IMR-90 (cell line): ENCODE measurements at regions of chr19 and their contacts with region 1.

Region 1: GRCh38 chr19:23686621-23687423 is at the start of gene ZNF675:
- DNase-seq: peak; percentile 89
- ATAC-seq: peak; percentile 96
- H3K4me3 ChIP-seq: peak within 1 kb of the TSS; percentile 88
- H3K27ac ChIP-seq: peak within 1 kb of the TSS; percentile 74
- H3K4me1 ChIP-seq: no peaks in the 10 kb centered on the region
- H3K27me3 ChIP-seq: no peaks in the 10 kb centered on the region
- CTCF ChIP-seq: 0 out of 2 replicates have a peak, but pooled peaks have one; percentile 1
- POLR2A ChIP-seq: peak; percentile 52; the same call in 1 of the 2 replicates
- RAD21 ChIP-seq: no peak
- total RNA-seq, gene ZNF675: 8.6 and 11.1 TPM in 2 replicates

Region 2: GRCh38 chr19:23075031-23075760 is 611.6 kb before region 1 on chr19:
- CTCF ChIA-PET with region 1: no interaction called
- POLR2A ChIA-PET with region 1: no interaction called
- dilution Hi-C with region 1: no loop called
- in situ Hi-C with region 1: no loop called
- intact Hi-C with region 1: loop called (anchors 10 kb)
- DNase-seq: peak; percentile 72
- ATAC-seq: peak; percentile 97
- H3K4me3 ChIP-seq: peak overlapping the region; percentile 96
- H3K27ac ChIP-seq: peak overlapping the region; percentile 54; the same call in 1 of the 2 replicates
- H3K4me1 ChIP-seq: no peaks in the 10 kb centered on the region
- H3K27me3 ChIP-seq: no peaks in the 10 kb centered on the region
- CTCF ChIP-seq: no peak
- POLR2A ChIP-seq: peak; percentile 2; the same call in 1 of the 2 replicates
- RAD21 ChIP-seq: no peak

Region 3: GRCh38 chr19:23758187-23759074 is 71.6 kb after region 1 on chr19 and contains the start of gene ZNF681:
- CTCF ChIA-PET with region 1: no interaction called
- POLR2A ChIA-PET with region 1: no interaction called
- dilution Hi-C with region 1: no loop called
- in situ Hi-C with region 1: no loop called
- intact Hi-C with region 1: loop called (anchors 2 kb)
- DNase-seq: peak; percentile 83
- ATAC-seq: peak; percentile 95
- H3K4me3 ChIP-seq: peak within 1 kb of the TSS; percentile 96
- H3K27ac ChIP-seq: peak within 1 kb of the TSS; percentile 66
- H3K4me1 ChIP-seq: no peaks in the 10 kb centered on the region
- H3K27me3 ChIP-seq: no peaks in the 10 kb centered on the region
- CTCF ChIP-seq: no peak
- POLR2A ChIP-seq: no peak
- RAD21 ChIP-seq: no peak
- total RNA-seq, gene ZNF681: 0.54 and 0.83 TPM in 2 replicates